H1 (cell line): ENCODE measurements at regions of chr21 and their contacts with region 1.

Region 1: DNA sequence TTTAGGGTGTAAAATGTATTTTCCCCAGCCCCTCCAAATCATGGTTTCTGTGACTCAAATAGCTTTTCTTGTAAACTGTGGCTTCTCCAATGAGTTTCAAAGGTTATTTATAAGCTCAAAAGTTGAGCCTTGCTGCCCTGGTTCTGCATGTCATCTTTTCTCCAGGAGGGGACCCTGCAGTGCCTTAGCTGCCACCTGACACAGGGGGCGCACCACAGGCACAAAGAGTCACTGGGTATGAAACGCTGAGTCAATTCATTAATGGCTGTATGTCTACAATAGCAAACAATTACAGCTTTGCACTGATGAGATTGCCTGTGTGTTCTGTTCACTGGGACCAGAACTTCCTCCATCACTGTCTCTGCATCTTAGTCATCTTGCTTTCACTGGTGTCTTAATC is 100.8 kb downstream of the PCP4 start:
- DNase-seq: peak in 1 of 2 experiments; percentile 50
- H3K4me3 ChIP-seq: no peak overlapping the region
- H3K27ac ChIP-seq: no peak overlapping the region
- H3K4me1 ChIP-seq: no peaks in the 10 kb centered on the region
- H3K27me3 ChIP-seq: no peaks in the 10 kb centered on the region
- CTCF ChIP-seq: peak; percentile 66 to 86 (median 67)
- EP300 ChIP-seq: no peak
- POLR2A ChIP-seq: no peak
- RAD21 ChIP-seq: peak; percentile 30 to 49; a peak in 3 of 4 replicates

Region 2: DNA sequence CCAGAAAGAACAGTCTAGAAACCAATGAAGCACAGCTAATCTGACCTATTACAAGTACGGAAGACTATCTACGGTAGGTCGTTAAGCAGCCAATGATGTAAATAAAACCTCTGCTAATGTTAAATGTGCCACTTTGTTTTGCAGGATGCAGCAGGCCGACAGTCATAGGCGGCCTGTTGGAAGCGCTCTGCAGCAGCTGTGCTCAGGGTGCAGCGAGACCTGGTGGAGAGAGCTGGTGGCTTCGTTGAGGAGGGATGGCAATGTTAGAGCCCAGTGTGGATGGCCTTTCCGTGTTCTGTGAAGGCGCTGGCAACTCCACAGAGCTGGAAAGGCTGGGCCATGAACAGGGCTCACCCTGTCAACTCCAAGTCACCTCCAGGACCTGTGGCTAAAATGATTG is 13.4 kb before region 1 on chr21:
- CTCF ChIA-PET with region 1: interaction called, 13 read pairs
- POLR2A ChIA-PET with region 1: no interaction called
- DNase-seq: no peak
- H3K4me3 ChIP-seq: no peak overlapping the region
- H3K27ac ChIP-seq: no peak overlapping the region
- H3K4me1 ChIP-seq: peaks cover 3 to 10% (median 4%) of the 10 kb centered on the region in 4 experiments; a peak in 6 of 7 replicates
- H3K27me3 ChIP-seq: peaks cover 0 to 3% (median 0%) of the 10 kb centered on the region in 4 experiments; a peak in 2 of 7 replicates
- CTCF ChIP-seq: no peak
- EP300 ChIP-seq: no peak
- POLR2A ChIP-seq: no peak
- RAD21 ChIP-seq: no peak

Region 3: GRCh38 chr21:40002978-40003377 is 35.0 kb after region 1 on chr21:
- CTCF ChIA-PET with region 1: no interaction called
- POLR2A ChIA-PET with region 1: no interaction called
- DNase-seq: no peak
- H3K4me3 ChIP-seq: no peak overlapping the region
- H3K27ac ChIP-seq: no peak overlapping the region
- H3K4me1 ChIP-seq: no peaks in the 10 kb centered on the region
- H3K27me3 ChIP-seq: no peaks in the 10 kb centered on the region
- CTCF ChIP-seq: no peak
- EP300 ChIP-seq: no peak
- POLR2A ChIP-seq: no peak
- RAD21 ChIP-seq: no peak

Region 4: DNA sequence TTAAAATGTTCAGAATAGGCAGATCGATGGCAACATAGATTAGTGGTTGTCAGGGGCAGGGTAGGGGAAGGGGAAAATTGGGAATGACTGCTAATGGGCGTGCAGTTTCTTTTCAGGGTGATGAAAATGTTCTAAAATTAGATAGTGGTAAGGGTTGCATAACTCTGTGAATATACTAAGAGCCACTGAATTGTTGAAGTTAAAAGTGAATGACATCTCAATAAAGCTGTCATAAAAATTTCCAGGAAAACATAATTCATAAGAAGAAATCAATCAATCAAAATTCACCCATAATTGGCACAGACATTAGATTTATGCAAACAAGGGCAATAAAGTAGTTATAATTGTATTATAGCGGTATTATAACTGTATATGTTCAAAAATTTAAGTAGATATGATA is 127.5 kb after region 1 on chr21:
- CTCF ChIA-PET with region 1: no interaction called
- POLR2A ChIA-PET with region 1: no interaction called
- DNase-seq: no peak
- H3K4me3 ChIP-seq: no peak overlapping the region
- H3K27ac ChIP-seq: no peak overlapping the region
- H3K4me1 ChIP-seq: no peaks in the 10 kb centered on the region
- H3K27me3 ChIP-seq: no peaks in the 10 kb centered on the region
- CTCF ChIP-seq: no peak
- EP300 ChIP-seq: no peak
- POLR2A ChIP-seq: no peak
- RAD21 ChIP-seq: no peak

Region 5: GRCh38 chr21:40194185-40194980 is 226.4 kb after region 1 on chr21:
- CTCF ChIA-PET with region 1: no interaction called
- POLR2A ChIA-PET with region 1: no interaction called
- DNase-seq: no peak
- H3K4me3 ChIP-seq: no peak overlapping the region
- H3K27ac ChIP-seq: no peak overlapping the region
- H3K4me1 ChIP-seq: no peaks in the 10 kb centered on the region
- H3K27me3 ChIP-seq: no peaks in the 10 kb centered on the region
- CTCF ChIP-seq: no peak
- EP300 ChIP-seq: no peak
- POLR2A ChIP-seq: no peak
- RAD21 ChIP-seq: no peak